Common myeloid progenitor, CD34-positive (primary cell): ENCODE measurements at regions of chr3 and their contacts with region 1.

Region 1: DNA sequence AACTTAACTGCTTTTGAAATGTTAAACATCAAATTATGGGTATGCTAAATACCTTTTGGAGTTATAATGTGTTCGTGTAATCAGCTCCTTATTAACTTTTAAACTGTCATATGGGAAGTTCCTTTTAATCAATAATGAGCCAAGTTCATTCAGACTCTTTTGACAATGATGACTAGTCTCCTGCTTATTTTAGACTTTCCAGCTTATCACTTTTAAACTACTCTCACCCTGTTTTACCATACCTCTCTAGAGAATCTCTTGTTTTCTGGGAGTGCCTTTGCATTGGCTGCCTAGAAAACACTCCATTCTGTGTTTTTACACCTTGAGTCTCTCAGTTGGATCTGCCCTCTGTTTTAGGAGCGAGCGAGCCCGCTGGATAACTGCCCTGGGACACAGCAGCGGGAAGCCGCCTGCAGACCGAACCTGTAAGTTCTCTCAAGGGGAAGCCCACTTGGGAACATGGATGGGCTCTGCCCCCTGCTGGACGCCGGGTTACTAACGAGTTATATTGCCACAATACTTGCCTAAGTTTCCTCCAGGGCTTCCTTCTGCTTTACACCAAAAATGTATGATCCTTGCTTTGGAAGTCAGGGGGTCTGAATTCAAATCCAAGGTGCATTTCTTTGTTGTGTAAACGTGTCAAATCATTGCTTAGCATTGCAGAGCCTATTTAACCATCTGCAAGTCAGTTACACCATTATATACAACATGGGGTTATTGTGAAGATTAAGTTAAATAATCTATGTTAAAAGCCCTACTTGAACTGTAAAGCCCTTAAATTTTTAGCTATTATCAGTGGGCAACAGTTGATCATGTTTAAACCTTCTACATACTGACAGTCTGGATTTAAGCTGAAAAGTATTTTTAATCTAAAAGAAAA is 71.3 kb downstream of the DHX36 start:
- DNase-seq: peak; percentile 86 to 93 (median 89)
- H3K4me3 ChIP-seq: peak overlapping the region in 2 of 7 experiments; percentile 46 to 55
- H3K27ac ChIP-seq: no peak overlapping the region
- H3K4me1 ChIP-seq: peaks cover 0 to 1% (median 0%) of the 10 kb centered on the region in 4 experiments
- H3K27me3 ChIP-seq: no peaks in the 10 kb centered on the region

Region 2: DNA sequence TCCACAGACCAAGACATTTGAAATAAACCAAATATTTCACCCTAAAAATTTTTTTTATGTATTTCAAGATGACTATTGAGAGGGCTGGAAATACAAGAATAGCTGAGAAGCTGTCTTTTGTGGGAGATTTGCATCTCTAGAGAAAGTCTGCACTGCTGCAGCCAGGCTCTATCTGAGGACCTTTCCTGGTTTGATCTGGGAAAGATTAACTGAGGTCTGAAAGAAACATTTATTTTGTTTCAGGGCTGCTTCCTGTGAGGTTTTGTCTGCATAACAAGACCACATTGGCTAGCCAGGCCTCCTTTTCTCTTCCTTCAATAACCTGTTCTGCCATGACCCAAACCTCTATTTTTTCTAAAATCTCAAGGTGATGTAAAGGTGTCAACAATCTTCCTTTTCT is 249.3 kb before region 1 on chr3:
- CTCF ChIA-PET with region 1: interaction called, 15 read pairs
- POLR2A ChIA-PET with region 1: no interaction called
- DNase-seq: no peak
- H3K4me3 ChIP-seq: no peak overlapping the region
- H3K27ac ChIP-seq: no peak overlapping the region
- H3K4me1 ChIP-seq: peaks cover 0 to 4% (median 0%) of the 10 kb centered on the region in 4 experiments
- H3K27me3 ChIP-seq: no peaks in the 10 kb centered on the region

Region 3: DNA sequence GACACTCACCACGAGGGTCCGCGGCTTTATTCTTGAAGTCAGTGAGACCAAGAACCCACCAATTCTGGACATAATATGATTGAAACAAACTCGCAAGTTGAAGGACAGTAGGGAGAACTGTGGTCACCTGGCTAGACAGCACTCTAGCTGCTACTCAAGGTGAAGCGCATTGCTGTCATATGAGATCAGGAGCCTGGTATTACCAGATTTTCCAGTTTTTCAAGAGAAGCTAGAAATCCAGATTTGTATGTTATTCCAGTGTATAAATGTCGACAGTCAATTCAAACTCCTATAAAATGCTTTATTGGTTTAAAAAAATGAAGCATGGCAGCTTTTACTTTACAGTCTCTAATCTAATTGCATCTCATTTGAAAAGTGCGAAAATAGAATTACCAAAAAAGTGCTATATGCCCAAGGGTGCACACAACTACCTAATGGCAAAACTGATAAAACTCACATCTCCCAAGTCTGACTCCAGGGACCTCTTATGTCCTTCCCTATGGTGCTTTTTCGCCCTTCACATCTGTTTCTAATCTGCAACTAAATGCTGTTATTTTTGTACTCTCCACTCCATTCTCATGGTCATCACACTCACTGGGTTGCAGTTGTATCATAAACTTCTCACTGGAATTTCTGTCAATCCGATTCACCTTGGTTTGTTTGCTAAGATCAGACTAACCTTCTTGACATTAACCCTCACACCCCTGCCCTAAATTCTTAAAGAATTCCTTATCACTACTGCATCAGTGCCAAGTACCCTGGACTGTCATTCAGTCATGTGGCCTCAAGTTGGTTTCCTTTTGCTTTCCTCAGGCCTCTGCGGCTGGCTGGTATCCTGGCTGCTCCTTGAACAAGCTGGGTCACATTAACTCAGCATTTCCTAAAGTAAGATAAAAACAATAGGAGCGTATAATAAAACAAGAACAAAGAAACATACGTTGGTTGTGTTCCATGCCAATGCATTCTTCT is 163.3 kb before region 1 on chr3:
- CTCF ChIA-PET with region 1: interaction called, 30 read pairs
- POLR2A ChIA-PET with region 1: no interaction called
- DNase-seq: peak; percentile 49 to 82 (median 71)
- H3K4me3 ChIP-seq: peak overlapping the region in 1 of 7 experiments; percentile 5
- H3K27ac ChIP-seq: no peak overlapping the region
- H3K4me1 ChIP-seq: peaks cover 0 to 21% (median 14%) of the 10 kb centered on the region in 4 experiments
- H3K27me3 ChIP-seq: no peaks in the 10 kb centered on the region

Region 4: DNA sequence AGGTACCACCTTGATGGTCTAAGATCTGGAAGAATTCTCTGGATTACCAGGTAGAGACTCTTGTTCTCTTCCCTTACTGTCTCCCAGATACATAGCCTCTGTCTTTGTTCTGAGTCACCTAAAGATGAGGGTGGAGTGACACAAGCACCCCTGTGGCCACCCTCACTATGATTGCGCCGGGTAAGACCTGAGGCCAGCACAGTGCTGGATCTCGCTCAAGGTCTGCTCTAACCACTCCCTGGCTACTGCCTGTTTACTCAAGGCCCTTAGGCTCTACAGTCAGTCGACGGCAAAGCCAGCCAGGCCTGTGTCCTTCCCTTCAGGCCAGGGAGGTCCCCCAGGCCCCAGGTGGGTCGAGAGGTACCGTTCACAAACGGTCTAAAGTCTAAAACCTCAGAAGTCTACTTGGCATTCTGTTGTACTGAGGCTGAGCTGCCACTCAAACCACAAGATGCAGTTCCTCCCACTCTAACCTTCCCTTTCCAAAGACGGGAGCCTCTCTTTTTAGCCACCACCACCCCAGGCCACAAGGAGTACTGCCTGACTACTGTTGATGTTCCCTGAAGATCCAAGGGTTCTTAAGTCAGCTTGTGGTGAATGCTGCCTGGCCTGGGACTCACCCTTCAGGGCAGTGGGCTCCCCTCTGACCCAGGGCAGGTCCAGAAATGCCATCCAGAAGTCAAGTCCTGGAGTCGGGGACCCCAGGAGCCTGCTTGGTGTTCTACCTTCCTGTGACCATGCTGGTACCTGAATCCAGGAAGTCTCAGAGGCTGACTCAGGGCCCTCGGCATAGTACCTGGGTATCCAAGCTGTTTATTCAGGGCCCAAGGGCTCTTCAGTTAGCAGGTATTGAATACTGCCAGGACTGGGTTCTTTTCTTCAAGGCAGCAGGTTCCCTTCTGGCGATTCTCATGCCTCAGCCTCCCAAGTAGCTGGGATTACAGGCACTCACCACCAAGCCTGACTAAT is 43.2 kb before region 1 on chr3:
- CTCF ChIA-PET with region 1: no interaction called
- POLR2A ChIA-PET with region 1: no interaction called
- DNase-seq: no peak
- H3K4me3 ChIP-seq: no peak overlapping the region
- H3K27ac ChIP-seq: no peak overlapping the region
- H3K4me1 ChIP-seq: no peaks in the 10 kb centered on the region
- H3K27me3 ChIP-seq: no peaks in the 10 kb centered on the region

Region 5: GRCh38 chr3:154615471-154615870 is 362.5 kb after region 1 on chr3:
- CTCF ChIA-PET with region 1: no interaction called
- POLR2A ChIA-PET with region 1: no interaction called
- DNase-seq: no peak
- H3K4me3 ChIP-seq: no peak overlapping the region
- H3K27ac ChIP-seq: no peak overlapping the region
- H3K4me1 ChIP-seq: no peaks in the 10 kb centered on the region
- H3K27me3 ChIP-seq: no peaks in the 10 kb centered on the region